Naive thymus-derived CD4-positive, alpha-beta T cell (primary cell): ENCODE measurements at regions of chr1 and their contacts with region 1.

Region 1: GRCh38 chr1:22025368-22026155 is 24.1 kb downstream of the CELA3A start:
- DNase-seq: peak; percentile 68 to 94 (median 89)
- ATAC-seq: peak; percentile 83
- H3K4me3 ChIP-seq: peak overlapping the region; percentile 91
- H3K4me3 Mint-ChIP-seq: peak overlapping the region; percentile 89 to 97 (median 94)
- H3K27ac ChIP-seq: peak overlapping the region; percentile 99
- H3K27ac Mint-ChIP-seq: peak overlapping the region; percentile 95 to 100 (median 98)
- H3K4me1 ChIP-seq: peaks cover 23 to 28% of the 10 kb centered on the region in 2 donors
- H3K4me1 Mint-ChIP-seq: peaks cover 33 to 76% (median 59%) of the 10 kb centered on the region in 7 donors
- H3K27me3 ChIP-seq: no peaks in the 10 kb centered on the region
- H3K27me3 Mint-ChIP-seq: no peaks in the 10 kb centered on the region

Region 2: GRCh38 chr1:21176586-21177555 is 848.7 kb before region 1 on chr1 and contains the start of gene EIF4G3:
- CTCF ChIA-PET with region 1: no interaction called
- POLR2A ChIA-PET with region 1: no interaction called
- intact Hi-C with region 1: loop called in 1 of 2 experiments (anchors 5 kb)
- DNase-seq: peak; percentile 96 to 100 (median 99)
- ATAC-seq: peak; percentile 96
- H3K4me3 ChIP-seq: peak within 1 kb of the TSS; percentile 87
- H3K4me3 Mint-ChIP-seq: peak within 1 kb of the TSS; percentile 83 to 97 (median 91)
- H3K27ac ChIP-seq: peak within 1 kb of the TSS; percentile 75
- H3K27ac Mint-ChIP-seq: peak within 1 kb of the TSS; percentile 87 to 95 (median 92)
- H3K4me1 ChIP-seq: peaks cover 8 to 9% of the 10 kb centered on the region in 2 donors
- H3K4me1 Mint-ChIP-seq: peaks cover 11 to 28% (median 19%) of the 10 kb centered on the region in 7 donors
- H3K27me3 ChIP-seq: no peaks in the 10 kb centered on the region
- H3K27me3 Mint-ChIP-seq: peaks cover 0 to 10% (median 0%) of the 10 kb centered on the region in 5 donors
- total RNA-seq, gene EIF4G3: 15.0 to 46.3 (median 29.1) TPM

Region 3: GRCh38 chr1:21659099-21659923 is 366.3 kb before region 1 on chr1:
- CTCF ChIA-PET with region 1: no interaction called
- POLR2A ChIA-PET with region 1: no interaction called
- intact Hi-C with region 1: loop called in 1 of 2 experiments (anchors 2 kb)
- DNase-seq: peak; percentile 73 to 91 (median 81)
- ATAC-seq: peak; percentile 99
- H3K4me3 ChIP-seq: peak overlapping the region; percentile 40
- H3K4me3 Mint-ChIP-seq: peak overlapping the region in 7 of 10 donors; percentile 18 to 66 (median 42)
- H3K27ac ChIP-seq: no peak overlapping the region
- H3K27ac Mint-ChIP-seq: peak overlapping the region in 1 of 9 donors; percentile 56
- H3K4me1 ChIP-seq: peaks cover 6% of the 10 kb centered on the region in 2 donors
- H3K4me1 Mint-ChIP-seq: peaks cover 0 to 9% (median 7%) of the 10 kb centered on the region in 7 donors
- H3K27me3 ChIP-seq: no peaks in the 10 kb centered on the region
- H3K27me3 Mint-ChIP-seq: peaks cover 14 to 30% (median 16%) of the 10 kb centered on the region in 5 donors

Region 4: GRCh38 chr1:21963477-21964217 is 61.9 kb before region 1 on chr1:
- CTCF ChIA-PET with region 1: interaction called, 4 read pairs
- POLR2A ChIA-PET with region 1: interaction called, 3 read pairs
- intact Hi-C with region 1: loop called (anchors 2 to 5 kb)
- DNase-seq: peak; percentile 63 to 89 (median 78)
- ATAC-seq: peak; percentile 95
- H3K4me3 ChIP-seq: no peak overlapping the region
- H3K4me3 Mint-ChIP-seq: peak overlapping the region in 2 of 10 donors; percentile 2 to 11
- H3K27ac ChIP-seq: no peak overlapping the region
- H3K27ac Mint-ChIP-seq: peak overlapping the region; percentile 38 to 94 (median 63)
- H3K4me1 ChIP-seq: no peaks in the 10 kb centered on the region
- H3K4me1 Mint-ChIP-seq: peaks cover 6 to 18% (median 11%) of the 10 kb centered on the region in 7 donors
- H3K27me3 ChIP-seq: no peaks in the 10 kb centered on the region
- H3K27me3 Mint-ChIP-seq: peaks cover 0 to 7% (median 0%) of the 10 kb centered on the region in 5 donors

Region 5: GRCh38 chr1:22071511-22071910 is 45.9 kb after region 1 on chr1:
- CTCF ChIA-PET with region 1: interaction called, 5 read pairs
- POLR2A ChIA-PET with region 1: interaction called, 13 read pairs
- intact Hi-C with region 1: no loop called
- DNase-seq: no peak
- ATAC-seq: no peak
- H3K4me3 ChIP-seq: no peak overlapping the region
- H3K4me3 Mint-ChIP-seq: peak overlapping the region in 9 of 10 donors; percentile 8 to 76 (median 63)
- H3K27ac ChIP-seq: no peak overlapping the region
- H3K27ac Mint-ChIP-seq: peak overlapping the region in 7 of 9 donors; percentile 46 to 89 (median 66)
- H3K4me1 ChIP-seq: peaks cover 63 to 71% of the 10 kb centered on the region in 2 donors
- H3K4me1 Mint-ChIP-seq: peaks cover 65 to 89% (median 78%) of the 10 kb centered on the region in 7 donors
- H3K27me3 ChIP-seq: no peaks in the 10 kb centered on the region
- H3K27me3 Mint-ChIP-seq: no peaks in the 10 kb centered on the region

Region 6: DNA sequence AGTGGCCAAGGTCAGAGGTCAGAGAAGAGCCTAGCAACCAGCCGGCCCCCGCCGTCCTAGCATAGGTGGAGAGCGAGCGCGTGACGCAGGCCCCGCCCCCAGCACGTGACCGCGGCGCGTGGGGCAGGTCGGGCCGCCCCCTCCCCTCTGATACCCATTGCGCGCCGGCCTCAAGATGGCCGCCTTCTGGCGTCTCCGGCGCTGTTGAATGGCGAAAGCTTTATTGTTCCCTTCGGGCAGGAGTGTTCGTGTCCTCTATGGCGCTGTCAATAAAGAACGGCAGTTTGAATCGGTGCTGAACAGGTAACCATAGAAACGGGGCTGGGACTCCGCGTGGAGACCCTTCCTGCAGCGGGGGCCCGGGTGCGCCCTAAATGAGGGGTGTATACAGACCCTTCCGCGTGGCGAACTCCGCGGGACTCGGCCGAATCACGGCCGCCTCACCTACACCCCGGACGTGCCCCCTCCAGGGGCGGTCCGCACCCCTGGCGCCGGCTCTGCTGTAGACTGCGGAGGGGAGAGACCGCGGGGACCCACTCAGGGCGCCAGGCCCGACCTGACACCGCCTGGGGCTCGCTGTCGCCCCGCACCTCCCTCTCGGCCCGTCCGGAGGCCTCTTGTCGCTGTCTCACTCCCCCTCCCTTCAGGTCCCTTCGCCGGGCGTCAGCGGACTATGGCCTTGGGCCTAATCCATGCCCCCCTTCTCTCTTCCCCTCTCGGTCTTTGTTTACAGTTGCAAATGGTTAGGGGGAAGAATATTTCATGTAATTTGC is 426.3 kb after region 1 on chr1 and contains the start of gene ZBTB40:
- CTCF ChIA-PET with region 1: no interaction called
- POLR2A ChIA-PET with region 1: no interaction called
- intact Hi-C with region 1: loop called in 1 of 2 experiments (anchors 1 kb)
- DNase-seq: peak; percentile 92 to 96 (median 94)
- ATAC-seq: peak; percentile 98
- H3K4me3 ChIP-seq: peak within 1 kb of the TSS; percentile 83
- H3K4me3 Mint-ChIP-seq: peak within 1 kb of the TSS; percentile 86 to 98 (median 92)
- H3K27ac ChIP-seq: peak within 1 kb of the TSS; percentile 85
- H3K27ac Mint-ChIP-seq: peak within 1 kb of the TSS; percentile 91 to 98 (median 95)
- H3K4me1 ChIP-seq: peaks cover 4 to 10% of the 10 kb centered on the region in 2 donors
- H3K4me1 Mint-ChIP-seq: peaks cover 11 to 52% (median 47%) of the 10 kb centered on the region in 7 donors
- H3K27me3 ChIP-seq: no peaks in the 10 kb centered on the region
- H3K27me3 Mint-ChIP-seq: peaks cover 0 to 4% (median 0%) of the 10 kb centered on the region in 5 donors
- total RNA-seq, gene ZBTB40: 23.1 to 60.6 (median 43.5) TPM